HEK293 (cell line): ENCODE measurements at regions of chr1 and their contacts with region 1.

Region 1: GRCh38 chr1:99481391-99481996 is 164.4 kb upstream of the PALMD start:
- H3K4me3 ChIP-seq: no peak overlapping the region
- H3K27ac ChIP-seq: no peak overlapping the region
- H3K4me1 ChIP-seq: no peaks in the 10 kb centered on the region
- CTCF ChIP-seq: no peak

Region 2: GRCh38 chr1:98794196-98794886 is 687.2 kb before region 1 on chr1:
- CTCF ChIA-PET with region 1: interaction called, 16 read pairs
- POLR2A ChIA-PET with region 1: no interaction called
- H3K4me3 ChIP-seq: no peak overlapping the region
- H3K27ac ChIP-seq: no peak overlapping the region
- H3K4me1 ChIP-seq: no peaks in the 10 kb centered on the region
- CTCF ChIP-seq: no peak

Region 3: DNA sequence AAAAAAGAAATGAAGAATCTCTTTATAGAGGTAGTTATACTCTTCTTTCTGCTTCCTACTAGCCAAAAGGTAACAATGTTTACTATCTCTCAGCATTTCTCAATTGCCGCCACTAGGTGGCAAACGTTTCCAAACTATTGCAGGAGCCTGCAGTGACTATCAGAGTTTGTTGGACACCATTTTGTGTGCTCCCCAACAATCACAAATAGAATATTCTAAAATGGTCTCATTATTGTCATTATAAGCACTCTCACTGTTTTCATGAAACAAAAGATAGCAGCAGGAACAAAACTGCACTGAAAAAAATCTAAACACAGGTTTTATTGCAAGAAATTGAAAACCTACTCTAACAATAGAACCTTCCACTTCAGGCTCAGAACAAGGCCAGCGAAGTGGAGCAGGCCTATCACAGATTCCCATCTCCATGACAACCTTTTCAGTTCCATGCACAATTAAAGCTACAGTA is 301.1 kb before region 1 on chr1:
- CTCF ChIA-PET with region 1: interaction called, 33 read pairs
- POLR2A ChIA-PET with region 1: no interaction called
- H3K4me3 ChIP-seq: no peak overlapping the region
- H3K27ac ChIP-seq: no peak overlapping the region
- H3K4me1 ChIP-seq: no peaks in the 10 kb centered on the region
- CTCF ChIP-seq: peak; percentile 33; the same call in 1 of the 2 replicates

Region 4: DNA sequence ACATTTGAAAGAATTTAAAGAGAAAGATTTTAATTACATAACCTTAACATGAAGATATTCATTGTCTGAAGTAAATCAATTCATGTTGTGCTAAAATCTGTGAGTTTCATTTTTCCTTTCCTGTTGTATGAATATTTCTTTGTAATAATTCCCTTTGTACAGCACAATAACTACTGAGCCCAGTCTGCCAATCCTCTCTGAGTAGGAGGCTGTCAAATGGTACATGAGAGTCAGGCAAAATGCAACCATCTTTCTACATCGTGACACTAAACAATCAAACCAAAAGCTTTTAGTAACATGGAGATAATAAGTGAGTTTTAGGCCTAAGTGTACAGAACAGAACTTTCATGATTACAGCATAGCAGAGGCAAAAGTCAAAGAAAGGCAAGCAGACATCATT is 51.7 kb before region 1 on chr1:
- CTCF ChIA-PET with region 1: no interaction called
- POLR2A ChIA-PET with region 1: no interaction called
- H3K4me3 ChIP-seq: no peak overlapping the region
- H3K27ac ChIP-seq: no peak overlapping the region
- H3K4me1 ChIP-seq: no peaks in the 10 kb centered on the region
- CTCF ChIP-seq: no peak

Region 5: GRCh38 chr1:99469550-99469971 is 11.9 kb before region 1 on chr1:
- CTCF ChIA-PET with region 1: interaction called, 14 read pairs
- POLR2A ChIA-PET with region 1: no interaction called
- H3K4me3 ChIP-seq: no peak overlapping the region
- H3K27ac ChIP-seq: no peak overlapping the region
- H3K4me1 ChIP-seq: no peaks in the 10 kb centered on the region
- CTCF ChIP-seq: no peak

Region 6: GRCh38 chr1:99497690-99498089 is 16.2 kb after region 1 on chr1:
- CTCF ChIA-PET with region 1: interaction called, 12 read pairs
- POLR2A ChIA-PET with region 1: no interaction called
- H3K4me3 ChIP-seq: no peak overlapping the region
- H3K27ac ChIP-seq: no peak overlapping the region
- H3K4me1 ChIP-seq: no peaks in the 10 kb centered on the region
- CTCF ChIP-seq: no peak

Region 7: DNA sequence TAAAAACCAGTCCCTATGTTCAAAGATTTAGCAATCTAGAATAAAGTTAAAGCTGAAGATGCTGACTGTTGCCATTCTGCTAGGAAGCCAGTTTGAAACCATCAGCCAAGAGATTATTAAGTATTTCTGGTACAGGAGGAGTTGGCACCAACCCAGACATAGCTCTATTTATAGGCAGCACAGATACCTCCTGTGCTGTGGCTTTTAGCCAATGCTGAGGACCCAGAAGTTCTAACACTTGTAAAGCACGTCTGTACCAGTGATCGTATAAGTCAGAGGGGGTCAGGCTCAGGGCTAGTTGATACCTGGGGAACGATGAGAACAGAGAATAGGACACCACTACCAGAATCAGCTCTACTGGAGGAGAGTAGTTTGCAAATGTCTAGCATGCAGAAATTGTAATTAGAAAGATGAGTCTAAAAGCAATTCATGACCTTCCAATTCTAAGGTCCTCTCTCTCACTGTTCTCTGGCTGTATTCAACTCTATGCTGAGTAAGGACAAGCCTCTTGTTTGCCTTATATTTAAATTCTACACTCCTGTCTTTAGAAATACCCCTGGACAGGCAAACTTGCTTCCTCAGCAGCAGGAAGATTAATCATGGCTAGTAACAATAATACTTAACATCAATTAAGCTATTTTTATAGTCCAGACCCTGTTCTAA is 67.6 kb after region 1 on chr1:
- CTCF ChIA-PET with region 1: no interaction called
- POLR2A ChIA-PET with region 1: no interaction called
- H3K4me3 ChIP-seq: no peak overlapping the region
- H3K27ac ChIP-seq: no peak overlapping the region
- H3K4me1 ChIP-seq: peaks cover 7% of the 10 kb centered on the region; the same call in 1 of the 2 replicates
- CTCF ChIP-seq: no peak

Region 8: DNA sequence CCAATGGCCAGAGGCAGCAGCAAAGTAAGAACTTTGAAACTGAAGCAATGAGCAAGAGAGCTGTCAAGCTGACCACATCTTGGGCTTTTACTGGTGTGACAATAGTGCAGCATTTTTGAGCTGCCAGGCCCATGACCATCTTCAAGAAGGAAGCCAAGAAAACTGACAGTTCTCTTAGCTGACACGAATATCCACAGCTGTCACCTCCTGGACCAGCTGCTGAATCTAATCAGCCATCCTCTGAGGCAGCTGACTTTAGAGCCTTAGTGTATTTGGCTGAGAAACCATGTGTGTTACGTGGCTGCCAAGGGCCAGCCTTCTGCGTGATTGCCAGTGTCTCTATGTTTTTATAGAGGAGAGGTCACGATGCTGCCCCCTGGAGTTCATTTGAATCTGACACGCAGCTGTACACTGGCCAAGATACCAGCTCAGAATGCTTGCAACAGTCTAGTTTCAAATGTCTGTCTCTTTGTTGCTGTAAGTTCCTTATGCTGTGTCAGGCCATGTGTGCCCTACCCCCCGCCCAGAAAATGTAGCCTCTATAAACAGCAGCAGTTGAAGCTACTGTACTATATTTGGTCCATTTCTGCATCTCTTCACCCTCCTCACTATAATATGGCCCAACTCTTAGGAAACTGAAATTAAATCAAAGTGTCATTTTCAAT is 204.2 kb after region 1 on chr1:
- CTCF ChIA-PET with region 1: interaction called, 16 read pairs
- POLR2A ChIA-PET with region 1: no interaction called
- H3K4me3 ChIP-seq: no peak overlapping the region
- H3K27ac ChIP-seq: no peak overlapping the region
- H3K4me1 ChIP-seq: peaks cover 8% of the 10 kb centered on the region
- CTCF ChIP-seq: peak; percentile 31; the same call in 1 of the 2 replicates